ENCODE measurements at regions of chr12 and their contacts with region 1.

Region 1: GRCh38 chr12:110698171-110698902 is 9.4 kb upstream of the HVCN1 start:
- DNase-seq: peak; percentile 80 to 86 (median 81)
- ATAC-seq: peak; percentile 69 to 86 (median 72)
- H3K4me3 ChIP-seq: peak overlapping the region in 8 of 12 donors; percentile 10 to 41 (median 26)
- H3K27ac ChIP-seq: peak overlapping the region in 10 of 12 donors; percentile 4 to 68 (median 39)
- H3K4me1 ChIP-seq: peaks cover 7 to 53% (median 15%) of the 10 kb centered on the region in 12 donors
- H3K27me3 ChIP-seq: no peaks in the 10 kb centered on the region
- CTCF ChIP-seq: peak; percentile 58 to 85 (median 72)
- POLR2A ChIP-seq: peak in 1 of 2 donors; percentile 24

Region 2: GRCh38 chr12:110449799-110450497 is 248.4 kb before region 1 on chr12 and contains the start of gene ARPC3:
- intact Hi-C with region 1: loop called in 1 of 10 experiments (anchors 5 kb)
- DNase-seq: peak; percentile 94 to 97 (median 95)
- ATAC-seq: peak; percentile 98 to 99 (median 99)
- H3K4me3 ChIP-seq: peak within 1 kb of the TSS; percentile 62 to 96 (median 85)
- H3K27ac ChIP-seq: peak within 1 kb of the TSS; percentile 74 to 99 (median 92)
- H3K4me1 ChIP-seq: peaks cover 0 to 46% (median 14%) of the 10 kb centered on the region in 12 donors
- H3K27me3 ChIP-seq: no peaks in the 10 kb centered on the region
- CTCF ChIP-seq: peak; percentile 76 to 96 (median 86)
- POLR2A ChIP-seq: peak in 1 of 2 donors; percentile 73
- total RNA-seq, gene ARPC3: 77.2 to 251 (median 108) TPM

Region 3: GRCh38 chr12:110501752-110502738 is 196.3 kb before region 1 on chr12 and contains the starts of genes RAD9B and VPS29:
- intact Hi-C with region 1: loop called in 1 of 10 experiments (anchors 10 kb)
- DNase-seq: peak; percentile 98 to 99 (median 98)
- ATAC-seq: peak; percentile 98 to 99 (median 99)
- H3K4me3 ChIP-seq: peak within 1 kb of the TSS; percentile 65 to 98 (median 89)
- H3K27ac ChIP-seq: peak within 1 kb of the TSS; percentile 64 to 96 (median 90)
- H3K4me1 ChIP-seq: peaks cover 0 to 40% (median 29%) of the 10 kb centered on the region in 12 donors
- H3K27me3 ChIP-seq: no peaks in the 10 kb centered on the region
- CTCF ChIP-seq: no peak
- POLR2A ChIP-seq: peak in 1 of 2 donors; percentile 87
- total RNA-seq, gene RAD9B: 0.67 to 4.8 (median 2.4) TPM in 7 of 9 donors, not detected in the others
- total RNA-seq, gene VPS29: 66.7 to 149 (median 89.5) TPM

Region 4: GRCh38 chr12:110513842-110514241 is 184.5 kb before region 1 on chr12:
- intact Hi-C with region 1: loop called in 5 of 10 experiments (anchors 5 to 10 kb)
- DNase-seq: no peak
- ATAC-seq: no peak
- H3K4me3 ChIP-seq: no peak overlapping the region
- H3K27ac ChIP-seq: no peak overlapping the region
- H3K4me1 ChIP-seq: peaks cover 0 to 4% (median 0%) of the 10 kb centered on the region in 12 donors
- H3K27me3 ChIP-seq: no peaks in the 10 kb centered on the region
- CTCF ChIP-seq: no peak
- POLR2A ChIP-seq: no peak

Region 5: DNA sequence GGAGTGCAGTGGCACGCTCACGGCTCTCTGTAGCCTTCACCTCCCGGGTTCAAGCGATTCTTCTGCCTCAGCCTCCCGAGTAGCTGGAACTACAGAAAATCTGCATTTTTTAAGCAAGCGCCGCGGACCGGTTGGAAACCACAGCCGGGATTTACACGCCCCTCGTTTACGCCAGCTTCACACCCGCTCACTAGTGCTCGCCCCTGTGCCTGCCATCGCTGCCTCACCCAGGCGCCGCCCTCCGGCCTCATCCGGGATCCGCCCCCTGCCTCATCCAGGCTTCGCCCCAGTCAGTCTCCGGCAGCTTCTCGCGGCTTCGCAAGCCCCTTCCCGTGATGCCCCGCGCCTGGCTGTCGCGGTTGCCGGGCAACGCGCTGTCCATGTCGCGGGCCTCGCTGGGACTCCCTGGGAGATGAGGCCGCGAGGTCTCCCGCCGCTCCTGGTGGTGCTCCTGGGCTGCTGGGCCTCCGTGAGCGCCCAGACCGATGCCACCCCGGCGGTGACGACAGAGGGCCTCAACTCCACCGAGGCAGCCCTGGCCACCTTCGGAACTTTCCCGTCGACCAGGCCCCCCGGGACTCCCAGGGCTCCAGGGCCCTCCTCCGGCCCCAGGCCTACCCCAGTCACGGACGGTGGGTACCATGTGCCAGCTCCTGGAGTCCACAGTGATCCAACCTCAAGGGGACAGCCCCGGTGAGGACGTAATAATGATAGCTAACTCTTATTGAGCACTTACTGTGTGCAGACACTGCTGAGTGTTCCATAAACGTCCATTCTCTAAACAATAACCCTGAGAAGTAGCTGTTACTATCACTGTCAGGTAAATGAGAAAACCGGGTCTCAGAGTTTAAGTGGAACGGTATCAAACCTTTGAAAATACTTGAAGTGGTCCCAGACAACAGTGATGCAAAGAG is 84.3 kb before region 1 on chr12 and contains the start of gene TCTN1:
- intact Hi-C with region 1: loop called in 5 of 10 experiments (anchors 2 to 5 kb)
- DNase-seq: peak; percentile 97 to 99 (median 98)
- ATAC-seq: peak; percentile 98 to 100 (median 100)
- H3K4me3 ChIP-seq: peak within 1 kb of the TSS; percentile 24 to 93 (median 65)
- H3K27ac ChIP-seq: peak within 1 kb of the TSS in 11 of 12 donors; percentile 47 to 82 (median 67)
- H3K4me1 ChIP-seq: peaks cover 0 to 15% (median 7%) of the 10 kb centered on the region in 12 donors
- H3K27me3 ChIP-seq: no peaks in the 10 kb centered on the region
- CTCF ChIP-seq: peak in 4 of 12 donors; percentile 10 to 28 (median 21)
- POLR2A ChIP-seq: peak in 1 of 2 donors; percentile 69
- total RNA-seq, gene TCTN1: 17.3 to 27.7 (median 20.2) TPM

Region 6: DNA sequence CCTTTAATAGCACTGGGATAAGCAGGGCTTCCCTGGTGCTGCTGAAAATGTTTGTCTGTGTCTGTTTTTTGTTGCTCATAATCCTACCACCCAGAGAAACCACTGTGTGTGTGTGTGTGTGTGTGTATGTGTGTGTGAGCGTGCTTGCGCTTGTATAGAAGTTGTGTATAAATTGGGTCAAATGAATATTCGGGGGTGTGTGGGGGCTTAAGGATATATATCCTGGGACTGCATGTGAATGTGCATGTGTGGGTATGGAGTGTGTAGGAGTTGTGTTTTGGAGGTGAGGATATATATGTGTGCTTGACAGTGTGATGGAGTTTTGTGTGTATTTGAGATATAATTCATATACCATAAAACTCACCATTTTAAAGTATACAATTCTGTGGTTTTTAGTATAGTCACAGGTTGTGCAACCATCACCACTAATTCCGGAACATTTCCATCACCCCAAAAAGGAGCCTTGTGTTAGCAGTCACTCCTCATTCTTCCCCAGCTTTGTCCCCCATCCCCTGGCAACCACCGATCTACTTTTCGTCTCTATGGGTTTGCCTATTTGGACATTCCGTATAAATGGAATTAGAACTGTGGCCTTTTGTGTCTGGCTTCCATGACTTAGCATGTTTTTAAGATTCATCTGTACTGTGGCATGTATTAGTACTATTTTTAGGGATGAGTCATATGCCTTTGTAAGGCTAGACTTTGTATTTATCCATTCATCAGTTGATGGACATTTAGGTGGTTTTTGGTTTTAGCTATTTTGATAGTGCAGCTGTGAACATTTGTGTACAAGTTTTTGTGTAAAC is 58.8 kb before region 1 on chr12:
- intact Hi-C with region 1: loop called in 2 of 10 experiments (anchors 5 kb)
- DNase-seq: no peak
- ATAC-seq: peak in 3 of 4 donors; percentile 38 to 54 (median 52)
- H3K4me3 ChIP-seq: no peak overlapping the region
- H3K27ac ChIP-seq: peak overlapping the region in 10 of 12 donors; percentile 10 to 80 (median 64)
- H3K4me1 ChIP-seq: peaks cover 0 to 35% (median 20%) of the 10 kb centered on the region in 12 donors
- H3K27me3 ChIP-seq: no peaks in the 10 kb centered on the region
- CTCF ChIP-seq: no peak
- POLR2A ChIP-seq: no peak

Region 7: DNA sequence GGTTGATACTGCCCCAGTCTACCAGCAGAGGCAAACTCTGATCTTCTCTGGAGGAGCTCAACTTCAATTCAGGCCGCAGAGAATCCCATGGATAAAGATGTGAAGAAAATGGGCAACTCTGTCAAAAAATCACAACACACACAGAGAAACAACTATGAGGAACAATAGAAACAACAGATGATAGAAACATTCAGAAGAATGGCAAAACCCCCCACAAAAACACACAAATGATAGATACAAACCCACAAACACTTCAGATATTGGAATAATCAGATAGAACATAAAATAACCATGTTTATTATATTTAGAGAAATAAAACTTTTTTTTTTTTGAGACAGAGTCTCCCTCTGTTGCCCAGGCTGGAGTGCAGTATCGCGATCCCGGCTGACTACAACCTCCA is 10.6 kb after region 1 on chr12:
- intact Hi-C with region 1: no loop called
- DNase-seq: no peak
- ATAC-seq: no peak
- H3K4me3 ChIP-seq: no peak overlapping the region
- H3K27ac ChIP-seq: no peak overlapping the region
- H3K4me1 ChIP-seq: no peaks in the 10 kb centered on the region
- H3K27me3 ChIP-seq: no peaks in the 10 kb centered on the region
- CTCF ChIP-seq: no peak
- POLR2A ChIP-seq: no peak

Region 8: DNA sequence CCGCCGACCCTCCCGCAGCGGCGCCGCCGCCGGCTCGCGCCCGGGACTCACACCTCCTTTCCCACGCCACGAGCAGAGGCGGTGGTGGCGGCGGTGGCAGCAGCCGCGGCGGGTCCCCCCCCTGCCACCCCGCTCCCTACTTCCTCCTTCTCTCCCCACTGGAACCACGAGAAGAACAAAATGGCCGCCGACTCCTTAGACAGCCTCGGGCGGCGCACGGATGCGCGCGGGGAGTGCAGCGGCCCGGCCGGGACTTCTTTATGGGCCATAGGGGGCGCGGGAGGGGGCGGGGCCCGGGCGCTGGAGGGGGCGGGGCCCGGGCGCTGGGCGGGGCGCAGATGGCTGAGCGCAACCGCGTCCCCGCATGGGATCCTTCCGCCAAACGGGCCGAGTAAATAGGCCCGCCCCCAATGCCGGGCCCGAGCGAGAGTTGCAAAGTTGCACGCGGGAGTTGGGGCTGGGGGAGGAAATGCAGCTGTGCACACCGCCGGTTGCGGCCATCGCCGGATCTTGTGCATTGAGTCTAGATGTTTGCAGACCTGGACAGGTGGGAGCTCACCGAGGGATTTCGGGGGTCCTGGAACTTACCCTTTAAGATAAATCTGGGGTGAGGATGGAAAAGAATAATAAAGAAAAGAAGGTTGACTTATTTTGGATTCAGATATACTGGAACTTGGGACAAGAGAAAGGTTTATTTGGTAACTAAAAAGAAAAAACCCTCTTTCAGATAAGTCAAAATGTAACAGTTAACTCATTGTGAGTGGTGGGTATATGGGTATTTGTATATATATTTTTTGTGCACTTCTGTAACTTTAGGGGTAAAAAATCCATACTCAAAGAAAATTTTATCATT is 44.6 kb after region 1 on chr12 and contains the start of gene PPP1CC:
- intact Hi-C with region 1: loop called in 1 of 10 experiments (anchors 5 kb)
- DNase-seq: peak; percentile 94 to 97 (median 96)
- ATAC-seq: peak; percentile 86 to 96 (median 94)
- H3K4me3 ChIP-seq: peak within 1 kb of the TSS; percentile 64 to 100 (median 97)
- H3K27ac ChIP-seq: peak within 1 kb of the TSS; percentile 83 to 97 (median 94)
- H3K4me1 ChIP-seq: peaks cover 2 to 66% (median 46%) of the 10 kb centered on the region in 12 donors
- H3K27me3 ChIP-seq: no peaks in the 10 kb centered on the region
- CTCF ChIP-seq: peak in 3 of 12 donors; percentile 10 to 40 (median 21)
- POLR2A ChIP-seq: peak in 1 of 2 donors; percentile 79
- total RNA-seq, gene PPP1CC: 110 to 207 (median 150) TPM